ENCODE measurements at regions of chr4 and their contacts with region 1.

Region 1: DNA sequence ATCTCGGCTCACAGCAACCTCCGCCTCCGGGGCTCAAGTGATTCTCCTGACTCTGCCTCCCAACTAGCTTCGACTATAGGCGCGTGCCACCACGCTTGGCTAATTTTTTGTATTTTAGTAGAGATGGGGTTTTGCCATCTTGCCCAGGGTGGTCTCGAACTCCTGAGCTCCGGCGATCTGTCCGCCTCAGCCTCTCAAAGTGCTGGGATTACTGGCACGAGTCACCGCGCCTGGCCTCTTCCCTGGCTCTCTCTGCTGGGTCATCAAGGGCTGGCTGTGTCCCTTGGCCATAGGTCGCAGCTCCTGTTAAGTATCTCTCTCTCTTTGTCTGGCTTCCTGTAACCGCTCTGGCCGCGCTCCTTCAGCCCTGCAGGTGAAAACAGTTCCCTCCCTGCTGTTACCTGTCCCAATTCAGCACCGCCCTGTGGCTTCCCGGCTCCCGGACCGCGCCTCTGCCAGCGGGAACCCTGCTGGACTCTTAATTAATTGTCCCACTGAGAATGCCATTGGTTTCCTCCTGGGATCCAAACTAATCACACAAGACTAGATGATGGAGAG is 1.3 kb upstream of the RGS12 start:
- DNase-seq: no peak
- ATAC-seq: no peak
- H3K4me3 ChIP-seq: peak overlapping the region; percentile 69 to 71
- H3K27ac ChIP-seq: peak overlapping the region; percentile 41
- H3K4me1 ChIP-seq: peaks cover 6% of the 10 kb centered on the region; the same call in 1 of the 2 replicates
- H3K27me3 ChIP-seq: no peaks in the 10 kb centered on the region
- CTCF ChIP-seq: no peak

Region 2: DNA sequence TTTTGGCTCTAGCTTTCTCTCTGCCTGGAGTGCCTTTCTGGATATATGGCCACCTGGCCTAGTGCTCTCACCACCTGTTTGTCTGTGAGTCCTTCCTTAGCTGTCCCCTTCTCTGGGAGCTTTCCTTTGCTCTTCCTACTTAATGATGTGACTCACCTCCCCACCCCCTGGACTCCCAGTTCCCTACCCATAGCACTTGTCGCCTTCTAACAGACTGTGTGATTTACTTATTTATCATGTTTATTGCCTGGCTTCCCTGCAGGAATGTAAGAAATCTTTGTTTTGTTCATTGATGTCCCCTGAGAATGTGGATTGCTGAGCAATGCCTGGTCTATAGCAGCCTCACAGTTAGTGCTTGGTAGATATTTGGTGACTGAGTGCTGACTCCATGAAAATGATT is 429.0 kb before region 1 on chr4:
- CTCF ChIA-PET with region 1: no interaction called
- POLR2A ChIA-PET with region 1: interaction called, 12 read pairs
- in situ Hi-C with region 1: no loop called
- intact Hi-C with region 1: no loop called
- DNase-seq: no peak
- ATAC-seq: peak; percentile 62
- H3K4me3 ChIP-seq: no peak overlapping the region
- H3K27ac ChIP-seq: no peak overlapping the region
- H3K4me1 ChIP-seq: peaks cover 38% of the 10 kb centered on the region
- H3K27me3 ChIP-seq: no peaks in the 10 kb centered on the region
- CTCF ChIP-seq: no peak

Region 3: GRCh38 chr4:3074078-3074795 is 217.3 kb before region 1 on chr4 and contains the starts of genes HTT and HTT-AS:
- CTCF ChIA-PET with region 1: no interaction called
- POLR2A ChIA-PET with region 1: interaction called, 10 read pairs
- in situ Hi-C with region 1: no loop called
- intact Hi-C with region 1: no loop called
- DNase-seq: peak; percentile 60
- ATAC-seq: peak; percentile 95
- H3K4me3 ChIP-seq: peak within 1 kb of the TSS; percentile 84 to 85
- H3K27ac ChIP-seq: peak within 1 kb of the TSS; percentile 74
- H3K4me1 ChIP-seq: peaks cover 11% of the 10 kb centered on the region; the same call in 1 of the 2 replicates
- H3K27me3 ChIP-seq: no peaks in the 10 kb centered on the region
- CTCF ChIP-seq: no peak
- total RNA-seq, gene HTT: 24.7 TPM
- total RNA-seq, gene HTT-AS: not detected

Region 4: DNA sequence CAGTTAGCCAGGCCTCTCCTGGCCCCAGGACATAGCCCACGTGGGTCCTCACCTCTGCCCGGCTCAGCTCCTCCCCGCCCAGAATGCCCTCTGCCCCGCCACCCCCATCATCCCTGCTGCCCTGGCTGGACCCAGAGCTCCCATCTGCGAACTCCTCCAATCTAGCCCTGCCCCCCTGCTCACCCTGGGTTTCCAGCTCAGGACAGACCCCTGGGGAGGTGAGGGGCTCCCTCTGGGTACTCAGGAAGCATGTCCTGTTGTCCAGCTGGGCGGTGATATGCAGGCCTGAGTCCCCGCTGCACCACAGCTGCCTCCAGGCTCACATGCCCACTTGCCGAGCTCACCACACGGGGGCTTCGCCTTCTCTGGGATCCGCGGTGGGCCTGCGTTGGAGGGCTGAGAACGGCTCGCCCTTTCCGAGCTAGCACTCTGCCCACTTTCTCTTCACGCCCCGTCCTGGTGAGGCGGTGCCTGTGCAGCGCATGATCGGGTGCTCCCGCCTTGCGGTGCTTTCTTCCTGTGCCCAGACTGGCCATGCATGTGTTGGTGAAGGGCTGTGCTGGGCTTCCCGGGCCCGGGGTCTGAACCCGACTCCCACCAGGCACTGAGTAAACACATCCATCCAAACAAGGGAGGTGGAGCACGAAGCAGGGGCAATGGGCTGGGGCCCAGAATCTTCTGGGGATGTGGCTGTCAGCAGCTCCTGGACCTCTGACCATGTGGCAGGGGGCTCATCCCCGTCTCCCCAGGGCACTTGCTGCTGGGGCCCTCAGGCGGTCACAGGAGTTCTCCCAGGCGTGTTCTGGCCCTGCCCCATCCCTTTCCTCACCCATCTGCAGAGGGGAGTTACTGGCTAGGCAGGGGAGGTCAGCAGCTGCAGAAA is 75.6 kb after region 1 on chr4:
- CTCF ChIA-PET with region 1: no interaction called
- POLR2A ChIA-PET with region 1: no interaction called
- in situ Hi-C with region 1: no loop called
- intact Hi-C with region 1: no loop called
- DNase-seq: no peak
- ATAC-seq: 0 out of 2 replicates have a peak, but pooled peaks have one; percentile 19
- H3K4me3 ChIP-seq: no peak overlapping the region
- H3K27ac ChIP-seq: no peak overlapping the region
- H3K4me1 ChIP-seq: no peaks in the 10 kb centered on the region; the same call in 1 of the 2 replicates
- H3K27me3 ChIP-seq: no peaks in the 10 kb centered on the region
- CTCF ChIP-seq: no peak

Region 5: GRCh38 chr4:3477750-3478430 is 186.4 kb after region 1 on chr4:
- CTCF ChIA-PET with region 1: interaction called, 10 read pairs
- POLR2A ChIA-PET with region 1: no interaction called
- in situ Hi-C with region 1: no loop called
- intact Hi-C with region 1: no loop called
- DNase-seq: no peak
- ATAC-seq: no peak
- H3K4me3 ChIP-seq: no peak overlapping the region
- H3K27ac ChIP-seq: no peak overlapping the region
- H3K4me1 ChIP-seq: no peaks in the 10 kb centered on the region; the same call in 1 of the 2 replicates
- H3K27me3 ChIP-seq: no peaks in the 10 kb centered on the region
- CTCF ChIP-seq: no peak